ENCODE measurements at regions of chr1 and their contacts with region 1.

Region 1: GRCh38 chr1:17970757-17971156 is 136.8 kb upstream of the IGSF21 start:
- DNase-seq: no peak
- H3K4me3 ChIP-seq: no peak overlapping the region
- H3K27ac ChIP-seq: no peak overlapping the region
- H3K4me1 ChIP-seq: peaks cover 0 to 2% of the 10 kb centered on the region in 2 experiments; a peak in 1 of 4 replicates
- H3K27me3 ChIP-seq: no peaks in the 10 kb centered on the region
- CTCF ChIP-seq: no peak
- EP300 ChIP-seq: no peak
- RAD21 ChIP-seq: no peak

Region 2: DNA sequence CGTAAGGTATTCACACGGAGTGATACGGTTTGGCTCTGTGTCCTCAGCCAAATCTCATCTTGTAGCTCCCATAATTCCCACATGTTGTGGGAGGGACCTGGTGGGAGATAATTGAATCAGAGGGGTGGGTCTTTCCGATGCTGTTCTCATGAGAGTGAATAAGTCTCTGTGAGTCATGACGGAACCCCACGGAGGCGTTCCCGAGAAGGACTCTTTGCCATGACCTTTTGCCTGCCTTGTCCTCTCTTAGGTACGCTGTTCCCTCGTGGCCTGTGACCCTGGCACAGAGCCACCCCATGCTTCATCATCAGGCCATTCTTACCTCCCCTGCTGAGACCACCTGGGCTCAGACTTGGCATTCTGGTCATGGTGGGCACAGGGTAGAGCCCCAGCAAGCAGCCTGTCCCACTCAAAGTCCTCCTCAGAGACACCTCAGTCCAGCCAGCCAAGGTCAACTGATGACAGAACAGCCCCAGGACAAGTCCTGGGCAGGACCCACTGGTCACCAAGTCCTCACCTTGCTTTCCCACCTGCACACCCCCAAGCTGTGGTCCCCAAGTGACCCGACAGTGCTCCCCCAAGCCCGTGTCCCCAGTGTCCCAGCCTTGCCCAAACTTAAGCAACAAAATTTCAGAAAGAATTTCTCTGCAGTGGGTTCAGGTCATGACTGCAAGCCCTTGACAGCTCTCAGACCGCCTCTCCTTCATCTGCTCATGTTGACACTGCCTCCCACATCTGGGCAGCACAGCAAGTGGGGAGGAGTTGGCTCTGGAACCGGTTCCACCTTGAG is 57.2 kb before region 1 on chr1:
- CTCF ChIA-PET with region 1: no interaction called
- POLR2A ChIA-PET with region 1: no interaction called
- DNase-seq: no peak
- H3K4me3 ChIP-seq: no peak overlapping the region
- H3K27ac ChIP-seq: no peak overlapping the region
- H3K4me1 ChIP-seq: no peaks in the 10 kb centered on the region; a peak in 1 of 4 replicates
- H3K27me3 ChIP-seq: no peaks in the 10 kb centered on the region
- CTCF ChIP-seq: no peak
- EP300 ChIP-seq: no peak
- RAD21 ChIP-seq: no peak

Region 3: GRCh38 chr1:17984583-17984982 is 13.8 kb after region 1 on chr1:
- CTCF ChIA-PET with region 1: interaction called, 16 read pairs
- POLR2A ChIA-PET with region 1: no interaction called
- DNase-seq: peak; percentile 49
- H3K4me3 ChIP-seq: no peak overlapping the region; a peak in 1 of 4 replicates
- H3K27ac ChIP-seq: no peak overlapping the region
- H3K4me1 ChIP-seq: no peaks in the 10 kb centered on the region; a peak in 1 of 4 replicates
- H3K27me3 ChIP-seq: no peaks in the 10 kb centered on the region
- CTCF ChIP-seq: peak; percentile 61
- EP300 ChIP-seq: no peak
- RAD21 ChIP-seq: peak; percentile 65